ENCODE measurements at regions of chrX and their contacts with region 1.

Region 1: DNA sequence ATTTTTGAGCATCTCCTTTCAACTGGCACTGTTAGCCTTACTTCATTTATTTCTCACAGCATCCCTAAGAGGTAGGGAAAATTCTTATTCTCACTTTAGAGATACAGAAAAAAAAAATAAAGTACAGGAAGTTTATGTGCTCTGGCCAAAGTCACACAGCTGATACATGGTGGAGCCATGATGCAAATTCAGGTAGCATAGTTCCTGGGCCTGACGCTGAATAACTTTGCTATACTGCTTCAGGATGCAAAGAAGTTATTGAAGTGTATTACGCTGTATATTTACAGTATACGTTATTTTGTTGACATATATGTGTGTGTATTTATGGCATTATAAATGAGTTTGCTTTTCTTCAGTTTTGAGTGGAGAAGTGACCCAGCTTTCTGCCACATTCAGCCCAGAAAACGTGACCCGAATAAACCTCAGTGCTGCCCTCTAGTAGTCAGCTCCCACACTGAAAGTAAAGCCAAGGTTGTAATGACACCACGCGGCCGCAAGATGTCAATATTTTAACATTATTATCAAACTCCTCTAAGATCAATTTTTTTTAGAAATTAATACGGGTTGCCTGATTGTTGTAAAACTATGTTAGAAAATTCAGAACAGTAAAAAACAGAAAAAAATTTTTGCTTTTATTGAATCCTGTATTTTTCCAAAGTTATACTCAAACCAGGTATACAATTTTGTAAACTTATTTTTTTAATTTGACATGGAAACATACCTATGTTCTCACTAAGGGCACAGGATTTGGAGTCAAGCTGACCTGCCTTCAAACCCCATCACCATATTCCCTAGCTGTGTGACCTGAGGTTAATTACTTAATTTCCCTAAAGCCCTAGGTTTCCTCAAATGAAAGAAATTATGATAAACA is 3.8 kb upstream of the GUCY2F start:
- DNase-seq: peak; percentile 74
- H3K4me3 Mint-ChIP-seq: no peak overlapping the region
- H3K27ac Mint-ChIP-seq: no peak overlapping the region
- H3K4me1 Mint-ChIP-seq: no peaks in the 10 kb centered on the region
- H3K27me3 Mint-ChIP-seq: peaks cover 4% of the 10 kb centered on the region

Region 2: GRCh38 chrX:109635176-109635575 is 149.5 kb after region 1 on chrX:
- CTCF ChIA-PET with region 1: interaction called, 23 read pairs
- intact Hi-C with region 1: loop called (anchors 1 kb)
- DNase-seq: no peak
- H3K4me3 Mint-ChIP-seq: no peak overlapping the region
- H3K27ac Mint-ChIP-seq: no peak overlapping the region
- H3K4me1 Mint-ChIP-seq: no peaks in the 10 kb centered on the region
- H3K27me3 Mint-ChIP-seq: no peaks in the 10 kb centered on the region

Region 3: DNA sequence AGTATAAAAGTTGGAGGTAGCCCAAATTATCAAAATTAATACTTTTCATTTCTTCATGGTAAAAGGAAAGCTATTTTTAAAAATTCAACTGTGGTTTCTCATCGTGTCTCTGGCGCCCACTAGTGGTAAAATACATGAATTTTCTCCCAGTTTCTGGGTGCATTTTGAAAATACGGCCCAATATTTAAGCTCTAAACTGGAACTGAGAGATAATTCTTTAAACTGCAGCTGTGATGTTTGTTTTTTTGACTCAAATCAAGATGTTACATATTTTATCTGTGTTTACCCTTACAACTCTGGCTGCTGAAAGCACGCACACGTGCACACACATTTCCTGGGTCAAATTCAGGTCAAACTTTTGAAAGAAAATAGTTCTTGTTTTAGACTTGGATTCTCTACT is 371.3 kb after region 1 on chrX:
- CTCF ChIA-PET with region 1: interaction called, 7 read pairs
- intact Hi-C with region 1: loop called (anchors 1 kb)
- DNase-seq: peak; percentile 15
- H3K4me3 Mint-ChIP-seq: no peak overlapping the region
- H3K27ac Mint-ChIP-seq: no peak overlapping the region
- H3K4me1 Mint-ChIP-seq: no peaks in the 10 kb centered on the region
- H3K27me3 Mint-ChIP-seq: no peaks in the 10 kb centered on the region

Measured in activated naive CD4-positive, alpha-beta T cell treated with anti-CD3 and anti-CD28 coated beads for 36 hours (primary cell).